Activated CD4-positive, alpha-beta memory T cell treated with anti-CD3 and anti-CD28 coated beads for 36 hours (primary cell): ENCODE measurements at regions of chr2 and their contacts with region 1.

Region 1: GRCh38 chr2:191555092-191555742 is 122.7 kb upstream of the NABP1 start:
- DNase-seq: peak; percentile 88
- H3K4me3 Mint-ChIP-seq: no peak overlapping the region
- H3K27ac Mint-ChIP-seq: no peak overlapping the region
- H3K4me1 Mint-ChIP-seq: peaks cover 2% of the 10 kb centered on the region
- H3K27me3 Mint-ChIP-seq: peaks cover 8% of the 10 kb centered on the region

Region 2: GRCh38 chr2:191539068-191539467 is 16.1 kb before region 1 on chr2:
- CTCF ChIA-PET with region 1: interaction called, 27 read pairs
- POLR2A ChIA-PET with region 1: no interaction called
- intact Hi-C with region 1: no loop called
- DNase-seq: peak; percentile 33
- H3K4me3 Mint-ChIP-seq: no peak overlapping the region
- H3K27ac Mint-ChIP-seq: no peak overlapping the region
- H3K4me1 Mint-ChIP-seq: no peaks in the 10 kb centered on the region
- H3K27me3 Mint-ChIP-seq: no peaks in the 10 kb centered on the region

Region 3: DNA sequence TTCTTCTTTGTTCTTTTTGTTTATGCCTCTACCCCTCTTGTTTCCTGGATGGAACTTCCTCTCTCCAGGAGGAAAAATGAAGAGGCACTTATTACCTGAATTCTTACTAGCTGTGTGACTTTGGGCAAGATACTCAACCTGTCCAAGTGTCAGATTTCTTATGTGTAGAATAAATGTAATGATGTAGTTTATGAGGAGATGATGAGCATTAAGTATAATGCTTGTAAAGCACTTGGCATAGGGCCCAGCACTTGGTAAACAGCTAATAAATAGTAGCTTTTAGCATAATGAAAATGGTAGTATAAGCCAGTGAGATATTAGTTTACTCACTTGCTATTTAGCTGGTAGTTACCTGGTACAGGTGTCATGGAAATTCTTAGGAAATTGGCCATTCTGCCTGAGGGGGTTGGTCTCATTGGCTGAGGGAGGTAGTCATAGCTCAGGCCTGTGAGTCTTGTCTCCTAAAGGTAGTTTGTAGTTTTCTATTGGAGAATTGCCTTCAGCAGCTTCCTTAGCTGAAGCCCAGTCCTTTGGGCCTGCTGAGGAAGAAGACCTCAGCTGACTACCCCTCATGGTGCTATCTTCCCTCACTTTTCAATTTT is 10.7 kb before region 1 on chr2:
- CTCF ChIA-PET with region 1: interaction called, 27 read pairs
- POLR2A ChIA-PET with region 1: no interaction called
- intact Hi-C with region 1: no loop called
- DNase-seq: no peak
- H3K4me3 Mint-ChIP-seq: no peak overlapping the region
- H3K27ac Mint-ChIP-seq: no peak overlapping the region
- H3K4me1 Mint-ChIP-seq: no peaks in the 10 kb centered on the region
- H3K27me3 Mint-ChIP-seq: no peaks in the 10 kb centered on the region

Region 4: DNA sequence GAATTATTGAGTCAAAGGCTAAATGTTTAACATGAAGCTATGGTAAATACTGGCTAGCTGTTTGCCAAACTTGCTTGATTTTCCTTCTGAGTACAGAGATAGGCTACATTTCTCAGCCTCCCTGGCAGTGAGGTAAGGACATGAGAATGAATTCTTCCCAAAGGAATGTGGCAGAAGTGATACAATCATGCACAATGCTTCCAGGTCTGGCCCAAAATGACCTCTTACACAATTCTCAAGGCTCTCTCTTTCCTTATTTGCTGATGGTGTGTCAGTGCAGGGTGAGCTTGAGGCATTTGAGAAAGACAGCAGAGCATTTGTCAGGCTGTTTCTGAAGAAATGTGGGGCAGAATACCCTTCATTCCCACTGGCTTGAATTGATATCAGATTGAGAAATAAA is 27.1 kb after region 1 on chr2:
- CTCF ChIA-PET with region 1: no interaction called
- POLR2A ChIA-PET with region 1: no interaction called
- intact Hi-C with region 1: no loop called
- DNase-seq: no peak
- H3K4me3 Mint-ChIP-seq: no peak overlapping the region
- H3K27ac Mint-ChIP-seq: no peak overlapping the region
- H3K4me1 Mint-ChIP-seq: no peaks in the 10 kb centered on the region
- H3K27me3 Mint-ChIP-seq: peaks cover 1% of the 10 kb centered on the region

Region 5: GRCh38 chr2:191811807-191812602 is 256.8 kb after region 1 on chr2:
- CTCF ChIA-PET with region 1: interaction called, 22 read pairs
- POLR2A ChIA-PET with region 1: no interaction called
- intact Hi-C with region 1: loop called (anchors 5 kb)
- DNase-seq: peak; percentile 54
- H3K4me3 Mint-ChIP-seq: no peak overlapping the region
- H3K27ac Mint-ChIP-seq: no peak overlapping the region
- H3K4me1 Mint-ChIP-seq: no peaks in the 10 kb centered on the region
- H3K27me3 Mint-ChIP-seq: peaks cover 6% of the 10 kb centered on the region